ENCODE measurements at regions of chr16 and their contacts with region 1.

Region 1: GRCh38 chr16:4506450-4506849 is 30.3 kb downstream of the HMOX2 start:
- DNase-seq: peak in 1 of 2 donors; percentile 75
- H3K4me3 ChIP-seq: no peak overlapping the region
- H3K27ac ChIP-seq: peak overlapping the region in 1 of 2 donors; percentile 22
- H3K4me1 ChIP-seq: peaks cover 0 to 6% of the 10 kb centered on the region in 2 donors
- H3K27me3 ChIP-seq: no peaks in the 10 kb centered on the region
- CTCF ChIP-seq: peak; percentile 67 to 85 (median 82)

Region 2: GRCh38 chr16:4548124-4548523 is 41.7 kb after region 1 on chr16:
- intact Hi-C with region 1: loop called (anchors 1 kb)
- DNase-seq: no peak
- H3K4me3 ChIP-seq: no peak overlapping the region
- H3K27ac ChIP-seq: no peak overlapping the region
- H3K4me1 ChIP-seq: no peaks in the 10 kb centered on the region
- H3K27me3 ChIP-seq: no peaks in the 10 kb centered on the region
- CTCF ChIP-seq: no peak

Region 3: DNA sequence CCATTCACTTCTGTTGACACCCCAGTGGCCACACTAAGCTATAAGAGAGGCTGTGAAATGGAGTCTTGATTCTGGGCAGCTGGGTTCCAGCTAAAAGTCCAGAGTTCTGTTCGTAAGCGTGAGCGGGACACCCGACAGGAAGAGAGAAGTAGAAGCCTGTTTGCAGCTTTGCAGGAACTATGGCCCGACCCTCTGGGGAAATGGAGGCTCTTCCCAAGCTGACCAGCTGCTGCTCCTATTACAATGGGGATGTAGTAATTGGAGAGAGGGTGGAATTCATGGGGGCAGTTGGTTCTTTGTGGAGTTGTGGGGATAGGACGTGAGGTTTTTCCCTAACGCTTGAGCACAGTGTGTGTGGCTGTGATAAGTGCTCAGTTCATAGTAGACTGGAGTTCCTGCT is 79.8 kb after region 1 on chr16:
- intact Hi-C with region 1: loop called (anchors 5 kb)
- DNase-seq: no peak
- H3K4me3 ChIP-seq: no peak overlapping the region
- H3K27ac ChIP-seq: no peak overlapping the region
- H3K4me1 ChIP-seq: no peaks in the 10 kb centered on the region
- H3K27me3 ChIP-seq: no peaks in the 10 kb centered on the region
- CTCF ChIP-seq: no peak